ENCODE measurements at regions of chr20 and their contacts with region 1.

Region 1: GRCh38 chr20:52937591-52938102 is 34.5 kb upstream of the TSHZ2 start:
- DNase-seq: no peak
- ATAC-seq: no peak
- H3K4me3 ChIP-seq: no peak overlapping the region
- H3K27ac ChIP-seq: no peak overlapping the region
- H3K4me1 ChIP-seq: no peaks in the 10 kb centered on the region
- H3K27me3 ChIP-seq: no peaks in the 10 kb centered on the region
- CTCF ChIP-seq: no peak

Region 2: GRCh38 chr20:52991830-52992229 is 54.2 kb after region 1 on chr20:
- intact Hi-C with region 1: loop called in 1 of 10 experiments (anchors 10 kb)
- DNase-seq: no peak
- ATAC-seq: peak in 4 of 8 donors; percentile 28 to 69 (median 44)
- H3K4me3 ChIP-seq: no peak overlapping the region
- H3K27ac ChIP-seq: peak overlapping the region in 5 of 10 donors; percentile 11 to 51 (median 38)
- H3K4me1 ChIP-seq: peaks cover 0 to 28% (median 13%) of the 10 kb centered on the region in 9 donors
- H3K27me3 ChIP-seq: no peaks in the 10 kb centered on the region
- CTCF ChIP-seq: no peak